Dendritic cell treated with granulocyte-macrophage colony-stimulating factor and Interleukin-4, amounts not matched to agents 40 ng/mL and 50 ng/mL, for 4 days (primary cell): ENCODE measurements at regions of chr11 and their contacts with region 1.

Region 1: GRCh38 chr11:44621140-44621681 is 55.7 kb downstream of the CD82 start:
- H3K4me3 Mint-ChIP-seq: no peak overlapping the region
- H3K27ac Mint-ChIP-seq: no peak overlapping the region
- H3K4me1 Mint-ChIP-seq: peaks cover 28% of the 10 kb centered on the region
- H3K27me3 Mint-ChIP-seq: peaks cover 19% of the 10 kb centered on the region

Region 2: DNA sequence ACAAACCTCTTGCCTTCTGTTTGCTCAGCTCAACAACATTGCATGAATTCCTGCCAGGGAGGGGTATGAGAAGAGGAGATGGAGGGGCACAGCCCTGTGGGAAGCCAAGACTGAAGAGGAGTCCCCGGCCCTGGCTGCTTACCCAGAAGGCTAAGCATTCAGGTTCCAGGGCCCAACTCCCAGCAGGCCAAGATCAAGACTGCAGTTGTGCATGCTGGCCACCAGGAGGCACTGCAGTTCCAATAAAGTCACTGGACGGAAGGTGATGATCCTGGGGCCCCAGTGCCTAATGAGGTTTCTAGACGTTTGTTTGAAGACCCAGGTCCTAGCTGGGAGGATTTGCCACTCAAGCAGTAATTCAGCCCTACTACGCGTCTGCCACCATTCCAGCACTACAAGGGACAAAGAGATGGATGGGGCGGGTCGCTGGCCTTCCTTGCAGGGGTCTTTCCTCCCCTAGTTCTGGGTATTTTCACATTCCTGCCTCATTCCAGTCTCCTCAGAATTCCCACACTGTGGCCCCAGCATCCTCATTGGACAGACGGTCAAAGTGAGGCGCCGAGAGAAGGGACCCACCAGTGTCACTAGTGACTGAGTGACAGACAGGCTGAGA is 334.8 kb before region 1 on chr11:
- intact Hi-C with region 1: loop called (anchors 5 kb)
- H3K4me3 Mint-ChIP-seq: no peak overlapping the region
- H3K27ac Mint-ChIP-seq: no peak overlapping the region
- H3K4me1 Mint-ChIP-seq: no peaks in the 10 kb centered on the region
- H3K27me3 Mint-ChIP-seq: peaks cover 9% of the 10 kb centered on the region

Region 3: GRCh38 chr11:44565211-44565952 is 55.8 kb before region 1 on chr11 and contains the start of gene CD82:
- intact Hi-C with region 1: no loop called
- H3K4me3 Mint-ChIP-seq: peak within 1 kb of the TSS; percentile 81
- H3K27ac Mint-ChIP-seq: peak within 1 kb of the TSS; percentile 93
- H3K4me1 Mint-ChIP-seq: peaks cover 75% of the 10 kb centered on the region
- H3K27me3 Mint-ChIP-seq: peaks cover 32% of the 10 kb centered on the region

Region 4: GRCh38 chr11:44775366-44775984 is 154.3 kb after region 1 on chr11:
- intact Hi-C with region 1: loop called (anchors 1 kb)
- H3K4me3 Mint-ChIP-seq: no peak overlapping the region
- H3K27ac Mint-ChIP-seq: no peak overlapping the region
- H3K4me1 Mint-ChIP-seq: no peaks in the 10 kb centered on the region
- H3K27me3 Mint-ChIP-seq: peaks cover 10% of the 10 kb centered on the region